Activated CD4-positive, alpha-beta T cell treated with anti-CD3 and anti-CD28 coated beads for 36 hours (primary cell): ENCODE measurements at regions of chr20 and their contacts with region 1.

Region 1: GRCh38 chr20:45347936-45348778 is at the start of gene SDC4:
- DNase-seq: peak; percentile 79
- ATAC-seq: peak; percentile 81
- H3K4me3 Mint-ChIP-seq: peak within 1 kb of the TSS; percentile 82
- H3K27ac Mint-ChIP-seq: peak within 1 kb of the TSS; percentile 81
- H3K4me1 Mint-ChIP-seq: peaks cover 44% of the 10 kb centered on the region
- H3K27me3 Mint-ChIP-seq: peaks cover 3% of the 10 kb centered on the region
- total RNA-seq, gene SDC4: 24.0 to 31.0 TPM

Region 2: DNA sequence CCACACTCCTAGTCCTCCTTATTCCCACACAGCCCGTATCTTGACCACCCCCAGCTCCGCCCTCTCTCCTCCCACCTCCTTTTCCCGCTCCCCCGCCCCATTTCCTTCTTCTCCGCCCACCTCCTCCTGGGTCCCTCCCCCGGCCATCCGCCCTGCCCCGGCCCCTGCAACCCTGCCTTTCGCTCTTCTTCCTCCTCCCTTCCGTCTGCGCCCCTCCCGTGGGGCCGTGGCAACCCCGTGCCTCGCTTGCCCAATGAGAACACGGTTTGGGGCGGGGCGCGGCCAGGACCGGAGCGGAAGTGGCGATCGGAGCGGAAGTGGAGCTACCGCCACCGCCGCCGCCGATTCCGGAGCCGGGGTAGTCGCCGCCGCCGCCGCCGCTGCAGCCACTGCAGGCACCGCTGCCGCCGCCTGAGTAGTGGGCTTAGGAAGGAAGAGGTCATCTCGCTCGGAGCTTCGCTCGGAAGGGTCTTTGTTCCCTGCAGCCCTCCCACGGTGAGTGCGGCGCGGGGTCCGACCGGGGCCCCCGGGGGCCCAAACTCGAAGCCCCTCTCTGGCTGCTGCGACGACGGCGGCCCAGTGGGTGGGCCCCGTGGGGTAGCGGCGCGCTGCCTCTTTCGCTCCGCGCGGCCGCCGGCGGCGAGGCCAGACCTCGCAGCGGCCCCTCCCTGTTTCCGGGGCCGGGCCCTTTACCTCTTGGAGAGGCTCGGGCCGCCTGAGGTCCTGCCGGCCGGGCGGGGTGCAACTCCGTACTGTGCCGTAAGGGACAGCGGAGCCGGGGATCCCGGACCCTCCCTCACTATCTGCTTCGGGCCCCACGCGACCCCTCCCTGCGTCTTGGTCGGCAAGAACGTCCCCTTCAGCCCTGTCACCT is 462.5 kb before region 1 on chr20 and contains the start of gene YWHAB:
- CTCF ChIA-PET with region 1: no interaction called
- POLR2A ChIA-PET with region 1: no interaction called
- intact Hi-C with region 1: no loop called
- DNase-seq: peak; percentile 99
- ATAC-seq: peak; percentile 96
- H3K4me3 Mint-ChIP-seq: peak within 1 kb of the TSS; percentile 94
- H3K27ac Mint-ChIP-seq: peak within 1 kb of the TSS; percentile 95
- H3K4me1 Mint-ChIP-seq: peaks cover 58% of the 10 kb centered on the region
- H3K27me3 Mint-ChIP-seq: no peaks in the 10 kb centered on the region
- total RNA-seq, gene YWHAB: 273 to 326 TPM

Region 3: GRCh38 chr20:45283548-45284057 is 64.6 kb before region 1 on chr20:
- CTCF ChIA-PET with region 1: no interaction called
- POLR2A ChIA-PET with region 1: no interaction called
- intact Hi-C with region 1: no loop called
- DNase-seq: no peak
- ATAC-seq: no peak
- H3K4me3 Mint-ChIP-seq: no peak overlapping the region
- H3K27ac Mint-ChIP-seq: no peak overlapping the region
- H3K4me1 Mint-ChIP-seq: no peaks in the 10 kb centered on the region
- H3K27me3 Mint-ChIP-seq: peaks cover 25% of the 10 kb centered on the region

Region 4: GRCh38 chr20:45322952-45323383 is 25.2 kb before region 1 on chr20:
- CTCF ChIA-PET with region 1: interaction called, 10 read pairs
- POLR2A ChIA-PET with region 1: interaction called, 3 read pairs
- intact Hi-C with region 1: no loop called
- DNase-seq: no peak
- ATAC-seq: no peak
- H3K4me3 Mint-ChIP-seq: no peak overlapping the region
- H3K27ac Mint-ChIP-seq: no peak overlapping the region
- H3K4me1 Mint-ChIP-seq: peaks cover 24% of the 10 kb centered on the region
- H3K27me3 Mint-ChIP-seq: no peaks in the 10 kb centered on the region

Region 5: GRCh38 chr20:45833030-45833882 is 485.1 kb after region 1 on chr20 and contains the start of gene SNX21:
- CTCF ChIA-PET with region 1: no interaction called
- POLR2A ChIA-PET with region 1: no interaction called
- intact Hi-C with region 1: loop called in 1 of 2 experiments (anchors 1 kb)
- DNase-seq: peak; percentile 59
- ATAC-seq: peak; percentile 60
- H3K4me3 Mint-ChIP-seq: peak within 1 kb of the TSS; percentile 69
- H3K27ac Mint-ChIP-seq: peak within 1 kb of the TSS; percentile 31
- H3K4me1 Mint-ChIP-seq: peaks cover 9% of the 10 kb centered on the region
- H3K27me3 Mint-ChIP-seq: peaks cover 3% of the 10 kb centered on the region
- total RNA-seq, gene SNX21: 1.2 to 1.4 TPM